A549 (cell line): ENCODE measurements at regions of chr11 and their contacts with region 1.

Region 1: GRCh38 chr11:4551346-4551979 is 6.5 kb downstream of the OR52M1 start:
- DNase-seq: peak in 1 of 2 experiments; percentile 19
- ATAC-seq: peak; percentile 73 to 87; a peak in 5 of 6 replicates
- H3K4me3 ChIP-seq: no peak overlapping the region
- H3K27ac ChIP-seq: no peak overlapping the region
- H3K4me1 ChIP-seq: peaks cover 13% of the 10 kb centered on the region; the same call in 2 of the 3 replicates
- CTCF ChIP-seq: peak; percentile 32; the same call in 1 of the 3 replicates
- EP300 ChIP-seq: no peak
- POLR2A ChIP-seq: no peak
- RAD21 ChIP-seq: peak in 1 of 2 experiments; percentile 34; a peak in 2 of 5 replicates

Region 2: DNA sequence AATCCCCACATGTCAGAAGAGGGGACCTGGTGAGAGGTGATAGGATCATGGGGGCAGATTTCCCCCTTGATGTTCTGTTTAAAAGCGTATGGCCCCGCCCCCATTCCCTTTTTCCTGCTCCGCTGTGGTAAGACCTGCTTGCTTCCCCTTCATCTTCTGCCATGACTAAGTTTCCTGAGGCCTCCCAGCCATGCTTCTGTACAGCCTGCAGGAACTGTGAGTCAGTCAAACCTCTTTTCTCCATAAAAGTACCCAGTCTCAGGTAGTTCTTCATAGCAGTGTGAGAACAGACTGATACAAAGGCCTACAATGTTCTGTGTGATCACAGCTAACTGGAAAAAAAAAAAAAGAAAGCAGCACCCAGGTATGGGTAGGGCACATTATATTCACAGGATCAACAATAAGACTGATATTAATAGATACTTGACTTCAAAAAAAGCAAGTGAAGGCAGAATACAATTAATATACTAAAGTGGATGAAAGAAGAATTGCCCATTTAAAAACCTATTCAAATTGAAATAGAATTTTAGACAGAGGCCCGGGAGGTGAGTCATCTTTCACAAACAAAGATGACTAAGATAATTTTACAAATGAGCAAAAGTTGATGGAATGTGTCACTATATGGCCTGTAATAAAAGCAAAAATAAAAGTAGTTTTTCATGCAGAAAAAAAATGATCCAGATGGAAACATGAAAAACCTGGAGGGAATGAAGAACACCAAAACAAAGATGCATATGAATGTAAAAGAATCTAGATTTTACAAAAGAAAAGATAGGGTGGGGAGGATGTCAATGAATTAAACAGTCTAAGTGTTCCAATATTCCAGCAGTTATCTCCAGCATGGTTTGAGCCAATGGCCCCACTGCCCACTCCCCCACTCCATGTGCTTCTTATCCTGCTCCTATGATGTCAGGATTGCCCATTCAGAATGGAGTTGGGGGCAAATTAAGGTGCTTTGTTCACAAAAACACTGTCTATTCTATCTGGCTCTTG is 70.6 kb before region 1 on chr11:
- CTCF ChIA-PET with region 1: no interaction called
- POLR2A ChIA-PET with region 1: no interaction called
- DNase-seq: no peak
- ATAC-seq: no peak
- H3K4me3 ChIP-seq: no peak overlapping the region
- H3K27ac ChIP-seq: no peak overlapping the region
- H3K4me1 ChIP-seq: peaks cover 8% of the 10 kb centered on the region; the same call in 2 of the 3 replicates
- CTCF ChIP-seq: no peak
- EP300 ChIP-seq: no peak
- POLR2A ChIP-seq: no peak
- RAD21 ChIP-seq: no peak

Region 3: DNA sequence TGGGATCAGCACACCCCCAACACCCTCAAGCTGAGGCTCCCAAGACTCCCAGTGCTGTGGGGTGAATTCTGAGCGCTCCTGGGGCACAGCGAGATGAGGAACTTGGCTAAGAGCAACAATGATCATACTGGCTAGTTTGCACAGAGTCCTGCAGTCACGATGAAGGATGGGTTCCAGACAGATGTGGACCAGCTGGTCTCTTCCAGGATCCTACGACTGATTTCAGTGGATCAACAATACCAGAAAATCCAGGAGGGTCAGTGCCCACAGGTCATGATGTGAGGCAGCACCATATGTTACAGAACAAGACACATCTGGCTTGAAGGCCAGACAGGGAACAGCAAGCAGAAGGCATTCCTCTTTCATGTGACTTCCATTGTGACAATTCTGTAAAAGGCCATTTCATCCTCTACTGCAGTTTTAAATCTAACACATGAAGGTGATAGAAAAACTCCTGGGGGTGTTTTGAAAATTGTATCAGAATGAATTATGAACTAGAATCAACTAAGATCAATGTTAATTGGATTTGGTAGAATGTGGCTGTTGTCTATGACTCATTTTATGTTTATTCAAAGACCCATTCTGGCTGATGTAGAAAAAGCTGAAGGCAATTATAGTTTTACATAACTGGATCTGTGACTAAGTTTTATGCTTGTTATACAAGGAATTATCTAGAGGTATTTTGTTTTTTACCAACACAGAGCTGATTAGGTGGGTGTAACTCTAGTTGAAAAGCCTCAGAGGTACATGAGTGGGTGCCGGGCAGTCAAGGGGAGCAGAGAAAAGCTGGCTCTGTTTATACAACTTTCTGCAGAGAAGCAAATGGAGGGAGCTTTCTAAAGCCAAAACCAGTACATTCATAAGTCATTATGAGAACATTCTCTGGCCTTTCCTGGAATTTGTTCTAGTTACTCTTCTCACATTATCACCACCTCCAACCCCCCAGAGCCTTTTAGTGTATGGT is 39.9 kb before region 1 on chr11:
- CTCF ChIA-PET with region 1: no interaction called
- POLR2A ChIA-PET with region 1: no interaction called
- DNase-seq: no peak
- ATAC-seq: no peak
- H3K4me3 ChIP-seq: no peak overlapping the region
- H3K27ac ChIP-seq: no peak overlapping the region
- H3K4me1 ChIP-seq: no peaks in the 10 kb centered on the region
- CTCF ChIP-seq: no peak
- EP300 ChIP-seq: no peak
- POLR2A ChIP-seq: no peak
- RAD21 ChIP-seq: no peak

Region 4: GRCh38 chr11:4539603-4540219 is 11.8 kb before region 1 on chr11:
- CTCF ChIA-PET with region 1: interaction called, 11 read pairs
- POLR2A ChIA-PET with region 1: no interaction called
- DNase-seq: peak; percentile 30 to 43
- ATAC-seq: peak; percentile 93 to 96
- H3K4me3 ChIP-seq: no peak overlapping the region
- H3K27ac ChIP-seq: no peak overlapping the region
- H3K4me1 ChIP-seq: no peaks in the 10 kb centered on the region
- CTCF ChIP-seq: peak; percentile 70
- EP300 ChIP-seq: no peak
- POLR2A ChIP-seq: no peak
- RAD21 ChIP-seq: peak; percentile 53 to 54; a peak in 4 of 5 replicates